ENCODE measurements at regions of chr7 and their contacts with region 1.

Region 1: GRCh38 chr7:27774717-27775328 is 34.9 kb downstream of the TAX1BP1 start:
- DNase-seq: peak; percentile 58
- ATAC-seq: peak; percentile 53; the same call in 1 of the 2 replicates
- H3K4me3 ChIP-seq: no peak overlapping the region
- H3K27ac ChIP-seq: no peak overlapping the region
- H3K4me1 ChIP-seq: no peaks in the 10 kb centered on the region
- H3K27me3 ChIP-seq: no peaks in the 10 kb centered on the region
- CTCF ChIP-seq: peak; percentile 69
- POLR2A ChIP-seq: no peak
- RAD21 ChIP-seq: peak; percentile 74

Region 2: DNA sequence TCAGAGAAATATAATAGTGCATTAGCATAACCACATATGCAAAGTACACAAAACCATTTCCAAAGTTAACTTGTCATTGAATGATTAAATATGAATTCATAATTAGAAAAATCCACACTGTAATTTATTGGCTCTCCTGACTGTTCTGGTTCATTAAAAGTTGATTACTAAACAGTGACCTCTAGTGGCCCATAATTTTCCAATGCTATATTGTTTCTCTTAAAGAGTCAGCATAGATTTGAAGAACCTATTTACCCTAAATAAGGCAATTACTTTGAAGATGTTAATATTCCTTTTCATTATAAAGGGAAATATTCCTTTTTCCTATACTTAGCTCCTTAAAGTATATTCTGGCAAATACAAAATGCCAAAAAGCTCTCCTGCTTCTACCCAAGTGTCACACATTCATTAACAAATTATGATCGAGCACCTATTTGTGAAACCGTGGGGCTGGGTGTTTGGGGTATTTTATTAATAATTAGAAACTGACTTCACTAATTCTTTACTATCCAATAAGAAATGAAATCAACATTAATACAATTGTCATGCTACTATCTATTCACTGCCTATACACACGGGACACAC is 198.4 kb before region 1 on chr7:
- CTCF ChIA-PET with region 1: no interaction called
- POLR2A ChIA-PET with region 1: no interaction called
- dilution Hi-C with region 1: no loop called
- in situ Hi-C with region 1: no loop called
- intact Hi-C with region 1: loop called (anchors 5 kb)
- DNase-seq: peak; percentile 46
- ATAC-seq: peak; percentile 75
- H3K4me3 ChIP-seq: no peak overlapping the region
- H3K27ac ChIP-seq: no peak overlapping the region
- H3K4me1 ChIP-seq: peaks cover 2% of the 10 kb centered on the region; the same call in 1 of the 2 replicates
- H3K27me3 ChIP-seq: no peaks in the 10 kb centered on the region
- CTCF ChIP-seq: peak; percentile 66
- POLR2A ChIP-seq: no peak
- RAD21 ChIP-seq: peak; percentile 60

Region 3: DNA sequence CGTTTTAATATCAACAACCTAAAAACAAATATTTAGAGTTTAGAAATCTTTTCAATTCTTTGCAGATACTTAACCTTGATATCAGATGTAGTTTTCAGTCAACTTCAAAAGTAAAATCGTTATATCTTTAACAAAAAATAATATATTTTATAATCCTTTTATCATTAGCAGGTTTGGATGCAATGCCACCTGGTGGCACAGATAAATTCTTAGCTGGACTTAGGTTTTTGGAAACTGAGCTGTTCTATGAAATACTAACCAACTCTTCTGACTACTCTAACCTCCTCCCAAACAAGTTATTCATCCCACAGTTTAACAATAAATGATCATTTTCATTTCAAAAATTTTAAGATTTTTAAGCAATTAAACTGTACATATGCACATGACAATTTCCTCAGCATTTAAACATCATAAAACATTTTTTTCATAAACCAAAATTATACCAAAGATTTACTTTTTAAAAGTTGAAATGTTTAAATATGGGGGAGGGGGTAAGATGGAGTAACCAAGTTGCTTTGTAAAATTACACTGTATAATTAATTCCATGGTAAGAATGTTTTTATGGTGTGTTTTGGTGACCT is 169.0 kb before region 1 on chr7:
- CTCF ChIA-PET with region 1: no interaction called
- POLR2A ChIA-PET with region 1: no interaction called
- dilution Hi-C with region 1: no loop called
- in situ Hi-C with region 1: no loop called
- intact Hi-C with region 1: loop called (anchors 10 kb)
- DNase-seq: peak; percentile 52
- ATAC-seq: peak; percentile 68
- H3K4me3 ChIP-seq: no peak overlapping the region
- H3K27ac ChIP-seq: no peak overlapping the region
- H3K4me1 ChIP-seq: peaks cover 6% of the 10 kb centered on the region
- H3K27me3 ChIP-seq: no peaks in the 10 kb centered on the region
- CTCF ChIP-seq: peak; percentile 51
- POLR2A ChIP-seq: no peak
- RAD21 ChIP-seq: peak; percentile 45

Region 4: DNA sequence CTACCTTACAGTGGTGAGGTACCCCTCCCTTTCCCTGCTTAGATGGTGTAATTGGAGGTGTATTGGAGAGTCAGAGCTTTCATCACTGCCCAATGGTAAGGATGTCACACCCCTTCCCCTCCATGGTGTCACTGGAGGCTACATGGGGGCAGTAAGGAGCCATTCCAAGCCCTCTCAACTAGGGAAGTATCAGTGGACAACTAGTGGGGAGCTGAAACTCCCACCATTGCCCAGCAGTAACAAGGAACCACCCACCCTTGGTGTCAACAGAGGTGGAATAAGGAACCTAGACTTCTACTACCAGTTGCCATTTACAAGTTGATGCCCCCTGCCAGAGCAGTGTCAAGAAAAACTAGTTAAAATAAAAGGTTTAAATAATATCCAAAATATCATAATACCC is 109.3 kb before region 1 on chr7:
- CTCF ChIA-PET with region 1: no interaction called
- POLR2A ChIA-PET with region 1: no interaction called
- dilution Hi-C with region 1: no loop called
- in situ Hi-C with region 1: no loop called
- intact Hi-C with region 1: no loop called
- DNase-seq: no peak
- ATAC-seq: no peak
- H3K4me3 ChIP-seq: no peak overlapping the region
- H3K27ac ChIP-seq: no peak overlapping the region
- H3K4me1 ChIP-seq: no peaks in the 10 kb centered on the region
- H3K27me3 ChIP-seq: no peaks in the 10 kb centered on the region
- CTCF ChIP-seq: no peak
- POLR2A ChIP-seq: no peak
- RAD21 ChIP-seq: no peak

Region 5: DNA sequence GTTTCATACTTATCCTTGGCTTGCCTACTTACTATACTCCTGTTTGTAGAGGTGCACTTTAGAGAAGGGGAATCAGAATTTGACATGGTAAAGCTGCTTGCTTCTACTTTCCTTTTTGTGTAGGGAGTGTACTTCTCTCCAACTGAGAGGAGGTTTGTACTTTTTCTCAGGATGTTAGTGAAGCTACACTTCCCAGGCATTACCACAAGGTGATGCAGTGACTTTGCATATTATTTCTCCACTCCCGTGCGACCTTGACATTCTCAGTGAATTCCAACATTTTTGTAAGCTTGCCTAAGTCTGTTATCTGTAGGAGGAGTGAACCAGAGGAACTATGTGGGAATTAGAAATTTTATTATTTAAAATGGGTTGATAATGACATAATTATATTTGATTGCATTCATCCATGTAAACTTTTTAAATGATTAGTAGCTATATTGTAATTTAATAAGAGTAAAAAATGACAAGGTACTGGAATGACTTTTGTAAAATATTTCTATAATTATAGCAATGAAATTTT is 29.7 kb before region 1 on chr7:
- CTCF ChIA-PET with region 1: interaction called, 16 read pairs
- POLR2A ChIA-PET with region 1: no interaction called
- dilution Hi-C with region 1: no loop called
- in situ Hi-C with region 1: no loop called
- intact Hi-C with region 1: no loop called
- DNase-seq: peak; percentile 84
- ATAC-seq: peak; percentile 63
- H3K4me3 ChIP-seq: peak overlapping the region; percentile 5; the same call in 1 of the 2 replicates
- H3K27ac ChIP-seq: peak overlapping the region; percentile 1; the same call in 1 of the 2 replicates
- H3K4me1 ChIP-seq: peaks cover 8% of the 10 kb centered on the region; the same call in 1 of the 2 replicates
- H3K27me3 ChIP-seq: no peaks in the 10 kb centered on the region
- CTCF ChIP-seq: peak; percentile 80
- POLR2A ChIP-seq: no peak
- RAD21 ChIP-seq: peak; percentile 75

Measured in IMR-90 (cell line).